K562 (cell line): ENCODE measurements at regions of chr3 and their contacts with region 1.

Region 1: GRCh38 chr3:137121704-137122314 is 164.0 kb downstream of the IL20RB start:
- DNase-seq: peak in 3 of 4 experiments; percentile 8 to 34 (median 9)
- ATAC-seq: peak; percentile 70
- H3K4me3 ChIP-seq: no peak overlapping the region
- H3K27ac ChIP-seq: no peak overlapping the region
- H3K4me1 ChIP-seq: no peaks in the 10 kb centered on the region
- H3K27me3 ChIP-seq: no peaks in the 10 kb centered on the region
- CTCF ChIP-seq: peak; percentile 26 to 62 (median 51); a peak in 5 of 6 replicates
- EP300 ChIP-seq: no peak
- POLR2A ChIP-seq: no peak
- RAD21 ChIP-seq: peak in 1 of 2 experiments; percentile 37; a peak in 2 of 4 replicates

Region 2: GRCh38 chr3:136818769-136819391 is 302.9 kb before region 1 on chr3 and contains the start of gene SLC35G2:
- CTCF ChIA-PET with region 1: no interaction called
- POLR2A ChIA-PET with region 1: no interaction called
- in situ Hi-C with region 1: no loop called
- intact Hi-C with region 1: no loop called
- DNase-seq: peak; percentile 39 to 63 (median 58)
- ATAC-seq: peak; percentile 88
- H3K4me3 ChIP-seq: peak within 1 kb of the TSS; percentile 57
- H3K27ac ChIP-seq: peak within 1 kb of the TSS; percentile 73; the same call in 2 of the 3 replicates
- H3K4me1 ChIP-seq: peaks cover 2 to 17% of the 10 kb centered on the region in 2 experiments; a peak in 4 of 5 replicates
- H3K27me3 ChIP-seq: no peaks in the 10 kb centered on the region
- CTCF ChIP-seq: no peak; a peak in 1 of 6 replicates
- EP300 ChIP-seq: no peak
- POLR2A ChIP-seq: no peak; the same call in 1 of the 2 replicates
- RAD21 ChIP-seq: no peak
- polyA plus RNA-seq, gene SLC35G2: 2.8 to 3.1 TPM

Region 3: GRCh38 chr3:137024348-137024747 is 97.5 kb before region 1 on chr3:
- CTCF ChIA-PET with region 1: no interaction called
- POLR2A ChIA-PET with region 1: no interaction called
- in situ Hi-C with region 1: no loop called
- intact Hi-C with region 1: no loop called
- DNase-seq: no peak
- ATAC-seq: no peak
- H3K4me3 ChIP-seq: no peak overlapping the region
- H3K27ac ChIP-seq: no peak overlapping the region
- H3K4me1 ChIP-seq: no peaks in the 10 kb centered on the region; a peak in 1 of 5 replicates
- H3K27me3 ChIP-seq: peaks cover 0 to 27% of the 10 kb centered on the region in 2 experiments; a peak in 2 of 5 replicates
- CTCF ChIP-seq: no peak
- EP300 ChIP-seq: no peak
- POLR2A ChIP-seq: no peak
- RAD21 ChIP-seq: no peak

Region 4: DNA sequence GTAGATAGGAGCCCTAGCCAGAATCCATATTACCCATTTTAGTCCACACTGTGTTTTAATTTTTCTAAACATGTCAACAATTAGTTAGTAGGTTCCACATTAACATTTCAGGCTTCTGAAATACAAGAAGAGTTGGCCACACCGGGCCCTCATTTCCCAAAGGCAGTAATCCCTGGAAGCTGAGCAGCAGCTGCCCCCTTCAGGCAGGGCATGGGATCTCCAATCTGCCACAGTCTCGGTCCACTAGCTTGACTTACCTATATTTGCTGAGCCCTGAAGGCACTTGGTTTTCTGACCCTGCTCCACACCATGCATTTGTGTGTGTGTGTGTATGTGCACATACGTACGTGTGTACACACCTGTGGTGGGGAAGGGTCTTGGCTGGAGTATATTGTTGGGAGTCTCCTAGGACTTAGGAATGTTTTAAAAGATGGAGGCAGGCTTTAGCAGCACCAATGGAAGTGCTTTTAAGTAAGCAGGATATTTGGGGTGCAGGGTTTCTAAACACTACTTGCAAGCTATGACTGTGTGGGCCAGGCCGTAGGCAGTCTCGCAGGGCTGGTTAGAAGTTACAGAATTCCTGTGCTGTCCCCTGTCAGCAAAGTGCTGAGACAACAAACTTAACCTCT is 571.1 kb after region 1 on chr3:
- CTCF ChIA-PET with region 1: no interaction called
- POLR2A ChIA-PET with region 1: no interaction called
- in situ Hi-C with region 1: no loop called
- intact Hi-C with region 1: loop called (anchors 10 kb)
- DNase-seq: peak in 3 of 4 experiments; percentile 9 to 27 (median 13)
- ATAC-seq: peak; percentile 69
- H3K4me3 ChIP-seq: no peak overlapping the region
- H3K27ac ChIP-seq: no peak overlapping the region
- H3K4me1 ChIP-seq: no peaks in the 10 kb centered on the region
- H3K27me3 ChIP-seq: no peaks in the 10 kb centered on the region
- CTCF ChIP-seq: peak; percentile 25 to 45 (median 41); a peak in 4 of 6 replicates
- EP300 ChIP-seq: no peak
- POLR2A ChIP-seq: no peak
- RAD21 ChIP-seq: peak in 1 of 2 experiments; percentile 36; a peak in 3 of 4 replicates